Posterior cingulate gyrus (tissue), 11 donors: ENCODE measurements at regions of chr1 and their contacts with region 1.

Region 1: DNA sequence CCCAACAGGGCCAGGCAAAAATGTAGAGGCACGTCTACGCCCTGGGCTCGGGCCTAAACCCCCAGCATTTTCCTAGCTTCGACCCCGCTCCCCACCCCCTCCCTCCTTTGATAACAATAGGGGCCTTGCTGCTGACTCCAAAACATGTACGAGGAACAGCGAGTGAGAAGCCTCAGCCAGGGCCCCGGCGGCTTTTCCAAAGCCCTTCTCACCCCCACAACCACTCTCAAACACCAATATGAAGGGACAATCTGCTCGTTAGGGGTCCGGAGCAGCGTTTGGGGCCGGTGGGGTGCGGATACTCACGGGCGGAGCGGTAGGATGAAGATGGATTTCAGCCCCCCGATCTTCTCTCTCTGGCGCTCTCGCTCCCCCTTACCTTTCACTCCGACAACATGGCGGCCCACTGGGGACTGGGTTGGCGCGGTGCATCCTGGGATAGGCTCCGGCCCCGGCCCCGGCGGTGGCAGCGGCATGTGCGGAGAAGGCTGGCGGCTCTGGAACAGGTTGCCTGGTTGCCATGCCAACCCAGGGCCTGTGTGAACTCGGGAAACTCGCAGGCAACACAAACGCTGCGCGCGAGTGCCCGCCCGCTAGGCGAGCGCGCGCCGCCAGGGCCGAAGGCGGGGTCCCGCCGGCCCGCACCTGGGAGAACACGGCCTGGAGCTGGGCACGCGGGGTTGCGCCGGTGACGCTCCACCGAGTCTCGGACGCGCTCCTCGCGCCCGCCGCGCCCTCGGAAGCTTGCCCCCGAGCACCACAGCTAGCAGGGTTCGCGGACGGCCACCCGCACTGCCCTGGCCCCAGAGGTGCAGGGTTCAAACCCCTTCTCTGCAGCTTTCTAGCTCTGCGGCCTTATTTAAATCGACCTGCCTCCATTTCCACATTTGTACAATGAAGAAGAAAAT is at the start of gene PUM1:
- DNase-seq: peak; percentile 94 to 99 (median 96)

Region 2: GRCh38 chr1:30955448-30956015 is 110.0 kb before region 1 on chr1:
- intact Hi-C with region 1: loop called (anchors 10 kb)
- DNase-seq: no peak

Region 3: DNA sequence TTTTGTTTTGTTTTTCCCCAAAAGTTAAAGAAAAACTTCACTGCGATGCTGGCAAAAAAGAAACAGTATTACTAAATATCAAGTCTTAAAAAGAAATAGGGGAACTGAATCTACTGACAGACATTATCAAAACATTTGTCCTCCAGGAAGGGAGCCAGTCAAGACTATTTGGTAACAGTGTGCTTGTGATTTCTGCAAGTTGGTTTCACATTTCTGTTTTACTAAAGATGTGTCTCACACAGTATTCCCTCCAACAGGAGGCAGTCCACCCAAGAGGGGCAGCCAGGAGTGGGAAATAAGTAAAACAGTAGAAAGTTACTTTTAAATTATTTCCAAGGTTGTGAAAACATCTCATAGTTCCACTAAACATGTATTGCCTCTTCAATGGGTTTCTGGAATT is 82.6 kb before region 1 on chr1:
- intact Hi-C with region 1: loop called (anchors 10 kb)
- DNase-seq: no peak